B cell (primary cell): ENCODE measurements at regions of chrX and their contacts with region 1.

Region 1: DNA sequence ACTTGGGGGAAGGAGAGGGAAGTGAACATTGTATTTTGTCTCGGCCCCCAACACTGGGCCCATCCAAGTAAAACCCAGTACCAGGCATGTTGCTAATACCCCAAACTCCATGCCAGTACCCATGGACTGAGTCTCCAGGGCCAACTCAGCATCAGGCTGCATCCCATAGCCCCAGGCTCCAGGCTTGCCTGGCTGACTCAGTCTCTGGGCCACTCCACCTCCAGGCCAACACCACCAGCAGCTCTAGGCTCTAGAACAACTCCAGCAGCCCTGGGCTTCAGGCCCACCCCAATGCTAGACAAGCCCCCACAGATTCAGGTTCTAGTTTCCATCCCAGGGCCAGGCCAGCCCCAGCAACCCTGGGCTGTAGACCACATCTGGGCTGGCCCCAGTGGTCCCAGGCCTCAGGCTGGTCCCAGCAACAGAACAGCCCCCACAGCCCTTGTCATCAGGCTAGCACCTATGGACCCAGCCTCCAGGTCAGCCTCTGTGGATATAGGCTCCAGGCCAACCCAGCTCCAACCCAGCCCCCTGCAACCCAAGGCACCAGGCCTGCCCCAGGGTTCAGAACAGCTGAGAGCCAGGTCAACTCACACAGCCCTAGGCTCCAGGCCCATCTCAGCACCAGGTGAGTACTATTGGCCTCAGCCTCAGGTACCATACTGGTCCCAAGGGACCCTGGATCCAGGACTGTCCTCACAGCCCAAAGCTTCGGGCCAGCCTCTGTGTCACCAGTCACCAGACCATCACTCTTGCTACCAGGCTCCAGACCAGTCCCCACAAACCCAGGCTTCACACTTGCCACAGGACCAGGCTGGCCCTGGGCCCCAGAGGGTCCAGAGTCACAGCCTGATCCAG is 155.2 kb downstream of the PWWP3B start:
- DNase-seq: no peak
- ATAC-seq: no peak
- H3K4me3 ChIP-seq: no peak overlapping the region
- H3K4me3 Mint-ChIP-seq: no peak overlapping the region
- H3K27ac ChIP-seq: no peak overlapping the region
- H3K27ac Mint-ChIP-seq: no peak overlapping the region
- H3K4me1 ChIP-seq: no peaks in the 10 kb centered on the region
- H3K4me1 Mint-ChIP-seq: no peaks in the 10 kb centered on the region
- H3K27me3 ChIP-seq: no peaks in the 10 kb centered on the region
- H3K27me3 Mint-ChIP-seq: no peaks in the 10 kb centered on the region
- CTCF ChIP-seq: no peak

Region 2: GRCh38 chrX:106144755-106145639 is 178.3 kb before region 1 on chrX:
- CTCF ChIA-PET with region 1: no interaction called
- POLR2A ChIA-PET with region 1: no interaction called
- intact Hi-C with region 1: loop called (anchors 10 kb)
- DNase-seq: no peak
- ATAC-seq: no peak
- H3K4me3 ChIP-seq: no peak overlapping the region
- H3K4me3 Mint-ChIP-seq: no peak overlapping the region
- H3K27ac ChIP-seq: no peak overlapping the region
- H3K27ac Mint-ChIP-seq: no peak overlapping the region
- H3K4me1 ChIP-seq: no peaks in the 10 kb centered on the region
- H3K4me1 Mint-ChIP-seq: no peaks in the 10 kb centered on the region
- H3K27me3 ChIP-seq: no peaks in the 10 kb centered on the region
- H3K27me3 Mint-ChIP-seq: no peaks in the 10 kb centered on the region
- CTCF ChIP-seq: no peak